ENCODE measurements at regions of chr19 and their contacts with region 1.

Region 1: GRCh38 chr19:49911381-49912145 is 14.9 kb upstream of the IL4I1 start:
- DNase-seq: peak; percentile 58
- ATAC-seq: peak; percentile 88
- H3K4me3 Mint-ChIP-seq: peak overlapping the region; percentile 34
- H3K27ac Mint-ChIP-seq: peak overlapping the region; percentile 92
- H3K4me1 Mint-ChIP-seq: peaks cover 56% of the 10 kb centered on the region
- H3K27me3 Mint-ChIP-seq: no peaks in the 10 kb centered on the region

Region 2: GRCh38 chr19:49843265-49843664 is 68.3 kb before region 1 on chr19:
- CTCF ChIA-PET with region 1: no interaction called
- POLR2A ChIA-PET with region 1: no interaction called
- intact Hi-C with region 1: no loop called
- DNase-seq: no peak
- ATAC-seq: no peak
- H3K4me3 Mint-ChIP-seq: no peak overlapping the region
- H3K27ac Mint-ChIP-seq: no peak overlapping the region
- H3K4me1 Mint-ChIP-seq: peaks cover 4% of the 10 kb centered on the region
- H3K27me3 Mint-ChIP-seq: no peaks in the 10 kb centered on the region

Region 3: GRCh38 chr19:49889687-49890348 is 21.7 kb before region 1 on chr19:
- CTCF ChIA-PET with region 1: interaction called, 4 read pairs
- POLR2A ChIA-PET with region 1: no interaction called
- intact Hi-C with region 1: loop called in 1 of 2 experiments (anchors 1 kb)
- DNase-seq: peak; percentile 89
- ATAC-seq: peak; percentile 61
- H3K4me3 Mint-ChIP-seq: peak overlapping the region; percentile 69
- H3K27ac Mint-ChIP-seq: peak overlapping the region; percentile 70
- H3K4me1 Mint-ChIP-seq: peaks cover 16% of the 10 kb centered on the region
- H3K27me3 Mint-ChIP-seq: no peaks in the 10 kb centered on the region

Region 4: DNA sequence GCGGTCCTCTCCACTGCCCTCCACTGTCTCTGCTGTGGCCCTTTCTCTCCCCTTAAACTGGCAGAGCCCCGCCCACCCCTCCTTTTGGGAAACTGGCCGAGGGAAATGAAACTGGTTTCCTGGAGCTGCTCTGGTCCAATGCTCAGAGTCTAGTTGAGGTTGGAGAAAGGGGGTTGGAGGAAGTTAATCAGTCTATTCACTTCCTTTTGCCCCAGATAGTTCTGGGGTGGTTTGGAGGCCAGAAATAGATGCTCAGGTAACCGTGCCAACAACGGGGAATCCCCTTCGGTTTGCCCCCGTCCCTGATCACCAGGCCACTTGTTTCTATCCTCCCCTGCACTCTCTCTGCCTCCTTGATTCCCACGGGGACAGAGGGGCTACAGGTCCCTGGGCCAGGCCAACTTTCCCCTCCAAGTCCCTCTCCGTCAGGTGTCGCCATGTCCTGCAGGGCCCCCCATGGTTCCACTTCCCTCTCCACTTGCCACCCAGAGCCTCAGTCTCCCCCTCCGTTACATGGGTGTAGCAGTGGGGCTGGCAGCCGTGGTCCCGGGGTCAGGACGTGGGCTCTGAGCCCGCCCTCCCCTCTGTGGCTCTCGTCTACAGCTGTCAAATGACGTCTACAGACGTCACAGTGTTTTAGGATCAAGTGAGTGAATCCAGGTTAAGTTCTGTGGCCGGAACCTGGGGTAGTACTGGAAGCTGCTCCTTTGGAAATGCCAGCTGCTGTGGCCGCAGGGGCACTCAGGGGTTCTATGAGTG is 14.5 kb before region 1 on chr19 and contains the start of gene IL4I1:
- CTCF ChIA-PET with region 1: interaction called, 4 read pairs
- POLR2A ChIA-PET with region 1: interaction called, 20 read pairs
- intact Hi-C with region 1: loop called in 1 of 2 experiments (anchors 1 kb)
- DNase-seq: peak; percentile 79
- ATAC-seq: peak; percentile 65
- H3K4me3 Mint-ChIP-seq: peak within 1 kb of the TSS; percentile 70
- H3K27ac Mint-ChIP-seq: peak within 1 kb of the TSS; percentile 95
- H3K4me1 Mint-ChIP-seq: peaks cover 49% of the 10 kb centered on the region
- H3K27me3 Mint-ChIP-seq: no peaks in the 10 kb centered on the region
- total RNA-seq, gene IL4I1: 21.2 to 22.2 TPM

Measured in activated CD4-positive, alpha-beta T cell treated with anti-CD3 and anti-CD28 coated beads for 36 hours (primary cell).